T-cell (primary cell): ENCODE measurements at regions of chr10 and their contacts with region 1.

Region 1: DNA sequence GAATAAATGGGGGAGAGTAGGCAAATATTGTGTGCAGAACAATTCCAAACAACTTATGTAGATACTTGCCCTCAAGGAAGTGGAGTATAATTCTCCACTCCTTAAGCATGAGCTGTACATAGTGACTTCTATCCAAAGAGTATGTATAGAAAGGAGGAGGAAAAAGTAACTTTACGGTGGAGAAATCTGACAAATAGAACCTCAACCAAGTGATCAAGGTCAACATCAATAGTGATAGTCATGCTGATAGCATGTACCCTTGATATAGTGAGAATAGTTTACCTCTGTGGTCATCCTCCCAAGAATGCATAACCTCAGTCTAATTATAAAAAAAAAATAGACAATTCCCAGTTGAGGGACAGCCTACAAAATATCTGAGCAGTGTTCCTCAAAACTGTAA is 89.1 kb upstream of the NANOS1 start:
- DNase-seq: no peak
- ATAC-seq: no peak
- H3K4me3 ChIP-seq: no peak overlapping the region
- H3K4me3 Mint-ChIP-seq: no peak overlapping the region
- H3K27ac ChIP-seq: no peak overlapping the region
- H3K27ac Mint-ChIP-seq: no peak overlapping the region
- H3K4me1 ChIP-seq: no peaks in the 10 kb centered on the region
- H3K4me1 Mint-ChIP-seq: no peaks in the 10 kb centered on the region
- H3K27me3 ChIP-seq: peaks cover 2 to 7% of the 10 kb centered on the region in 2 experiments
- H3K27me3 Mint-ChIP-seq: peaks cover 26 to 32% of the 10 kb centered on the region in 2 donors

Region 2: DNA sequence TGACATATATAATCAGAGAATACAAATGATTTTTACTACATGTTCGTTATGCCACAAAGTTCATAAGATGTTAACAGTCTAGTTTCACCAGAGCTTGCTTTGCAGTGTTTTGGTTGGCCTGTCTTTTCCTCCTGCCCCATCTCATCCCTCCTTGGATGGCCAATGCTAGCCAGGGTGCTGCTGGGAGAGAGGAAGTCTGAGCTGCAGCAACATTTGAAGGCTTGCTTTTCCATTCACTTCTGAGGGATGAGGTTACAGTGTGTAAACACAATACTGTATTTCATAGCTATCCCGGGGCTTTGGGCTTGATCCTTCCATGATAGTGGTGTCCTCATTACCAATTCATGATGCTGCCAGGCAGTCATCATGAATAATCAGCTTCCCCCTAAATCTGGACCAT is 1064.2 kb before region 1 on chr10:
- CTCF ChIA-PET with region 1: interaction called in 1 of 2 experiments, 11 read pairs
- POLR2A ChIA-PET with region 1: no interaction called
- DNase-seq: no peak
- ATAC-seq: no peak
- H3K4me3 ChIP-seq: no peak overlapping the region
- H3K4me3 Mint-ChIP-seq: no peak overlapping the region
- H3K27ac ChIP-seq: no peak overlapping the region
- H3K27ac Mint-ChIP-seq: no peak overlapping the region
- H3K4me1 ChIP-seq: no peaks in the 10 kb centered on the region
- H3K4me1 Mint-ChIP-seq: no peaks in the 10 kb centered on the region
- H3K27me3 ChIP-seq: peaks cover under 1 to 2% of the 10 kb centered on the region in 2 experiments
- H3K27me3 Mint-ChIP-seq: peaks cover 5 to 12% of the 10 kb centered on the region in 2 donors